Activated naive CD4-positive, alpha-beta T cell treated with anti-CD3 and anti-CD28 coated beads for 36 hours (primary cell): ENCODE measurements at regions of chr14 and their contacts with region 1.

Region 1: DNA sequence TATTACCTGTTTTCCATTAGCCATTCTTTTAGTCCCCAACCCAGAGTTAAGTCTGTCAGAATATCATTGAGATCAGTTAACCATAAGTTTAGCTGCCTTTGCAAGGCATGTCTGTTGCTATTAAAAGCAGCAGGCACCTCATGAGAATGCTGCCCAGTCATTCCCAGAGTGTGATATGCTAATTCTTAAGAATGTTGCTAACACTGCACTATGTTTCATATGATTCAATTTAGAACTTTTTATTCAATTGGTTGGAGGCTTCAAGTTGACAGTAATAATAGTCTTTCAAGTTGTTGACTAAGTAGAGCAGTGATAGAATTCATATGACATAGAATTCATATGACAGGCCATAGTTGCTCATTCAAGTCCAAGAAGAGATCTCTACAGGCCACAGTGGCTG is 292.3 kb downstream of the FUT8 start:
- DNase-seq: peak; percentile 75
- H3K4me3 Mint-ChIP-seq: no peak overlapping the region
- H3K27ac Mint-ChIP-seq: peak overlapping the region; percentile 72
- H3K4me1 Mint-ChIP-seq: peaks cover 12% of the 10 kb centered on the region
- H3K27me3 Mint-ChIP-seq: no peaks in the 10 kb centered on the region

Region 2: DNA sequence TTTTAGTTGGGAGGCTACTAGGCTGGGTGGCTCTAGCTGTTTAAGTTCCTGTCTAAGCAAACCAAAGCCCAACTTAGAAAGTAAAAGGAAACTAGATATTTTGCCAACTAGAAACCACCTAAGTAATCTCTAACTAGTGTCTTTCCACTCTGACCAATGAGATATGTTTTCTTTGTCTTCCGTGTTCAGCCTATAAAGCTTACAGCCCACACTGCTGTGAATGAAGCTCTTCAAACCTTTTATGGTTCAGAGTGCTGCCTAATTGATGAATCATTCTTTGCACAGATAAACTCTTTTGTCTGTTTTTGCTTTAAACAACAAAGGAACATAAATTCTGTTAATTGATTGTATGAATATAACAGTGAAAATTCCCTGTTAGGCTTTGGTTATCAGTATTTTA is 226.3 kb before region 1 on chr14:
- CTCF ChIA-PET with region 1: no interaction called
- intact Hi-C with region 1: loop called (anchors 2 kb)
- DNase-seq: peak; percentile 13
- H3K4me3 Mint-ChIP-seq: no peak overlapping the region
- H3K27ac Mint-ChIP-seq: no peak overlapping the region
- H3K4me1 Mint-ChIP-seq: peaks cover 61% of the 10 kb centered on the region
- H3K27me3 Mint-ChIP-seq: no peaks in the 10 kb centered on the region

Region 3: DNA sequence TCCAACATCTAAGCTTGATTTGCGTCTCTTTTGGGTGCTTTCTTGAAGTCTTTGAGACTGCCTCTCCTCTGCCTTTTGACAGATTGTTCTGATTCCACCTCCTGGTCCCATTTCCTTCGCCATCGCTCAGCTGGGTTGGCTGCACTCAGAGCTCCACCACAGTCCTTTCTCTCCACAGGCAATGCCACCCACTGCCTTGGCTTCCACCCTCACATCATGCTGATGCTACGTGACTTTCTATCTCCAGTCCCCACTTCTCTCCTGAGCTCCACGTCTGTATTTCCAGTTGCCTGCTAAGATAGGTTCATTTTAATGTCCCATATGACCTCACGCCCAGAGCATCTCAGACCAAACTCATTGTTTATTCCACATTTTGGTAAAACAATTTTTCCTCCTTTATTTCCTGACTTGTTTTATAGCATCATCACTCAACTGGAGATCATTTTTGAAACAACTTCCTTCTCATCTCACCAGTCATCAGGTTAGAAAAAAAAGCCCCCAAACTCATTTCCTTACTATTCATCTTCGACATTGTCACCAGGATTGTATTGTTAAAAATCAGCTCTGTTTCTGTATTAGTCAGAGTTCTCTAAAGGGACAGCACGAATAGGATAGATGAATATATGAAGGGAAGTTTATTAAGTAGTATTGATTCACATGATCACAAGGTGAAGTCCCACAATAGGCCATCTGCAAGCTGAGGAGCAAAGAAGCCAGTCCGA is 100.1 kb after region 1 on chr14:
- CTCF ChIA-PET with region 1: no interaction called
- intact Hi-C with region 1: loop called (anchors 1 kb)
- DNase-seq: no peak
- H3K4me3 Mint-ChIP-seq: no peak overlapping the region
- H3K27ac Mint-ChIP-seq: no peak overlapping the region
- H3K4me1 Mint-ChIP-seq: peaks cover 4% of the 10 kb centered on the region
- H3K27me3 Mint-ChIP-seq: no peaks in the 10 kb centered on the region

Region 4: DNA sequence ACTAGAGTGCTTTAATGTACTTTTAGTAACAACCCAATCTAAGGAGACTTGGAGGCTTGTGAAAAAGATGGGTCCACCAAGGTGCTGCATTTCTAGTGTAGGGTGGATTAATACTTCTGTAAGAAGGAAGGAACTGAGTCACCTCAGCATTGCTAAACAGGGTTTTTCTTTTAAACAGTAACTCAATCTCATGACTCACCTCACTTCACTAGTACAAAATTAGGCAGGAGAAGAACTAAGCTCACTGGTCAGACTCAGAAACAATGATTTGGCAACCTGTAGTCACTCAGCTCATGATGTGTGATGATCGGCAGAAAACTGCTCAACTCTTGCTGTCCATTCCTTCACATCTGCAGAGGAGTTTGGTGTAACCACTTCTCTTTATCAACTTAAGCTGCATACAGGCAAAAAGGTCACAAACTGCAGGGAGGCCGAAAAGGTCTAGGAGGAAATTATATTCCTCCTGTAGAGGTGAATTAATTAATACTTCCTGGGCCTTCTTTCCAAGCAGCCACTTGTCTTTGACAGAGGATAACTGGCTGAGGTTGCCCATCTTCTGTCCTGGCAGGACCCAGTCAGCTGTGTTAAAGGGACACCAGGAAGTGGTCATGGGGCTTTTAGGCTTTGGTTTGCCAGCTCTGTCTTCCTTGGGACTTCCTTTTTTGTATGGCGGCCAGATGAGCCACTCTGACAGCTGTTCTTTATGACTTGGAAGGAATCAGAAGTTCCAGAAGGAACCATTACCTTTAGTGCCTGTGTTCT is 174.6 kb after region 1 on chr14:
- CTCF ChIA-PET with region 1: no interaction called
- intact Hi-C with region 1: loop called (anchors 1 kb)
- DNase-seq: peak; percentile 18
- H3K4me3 Mint-ChIP-seq: no peak overlapping the region
- H3K27ac Mint-ChIP-seq: peak overlapping the region; percentile 48
- H3K4me1 Mint-ChIP-seq: peaks cover 31% of the 10 kb centered on the region
- H3K27me3 Mint-ChIP-seq: no peaks in the 10 kb centered on the region

Region 5: DNA sequence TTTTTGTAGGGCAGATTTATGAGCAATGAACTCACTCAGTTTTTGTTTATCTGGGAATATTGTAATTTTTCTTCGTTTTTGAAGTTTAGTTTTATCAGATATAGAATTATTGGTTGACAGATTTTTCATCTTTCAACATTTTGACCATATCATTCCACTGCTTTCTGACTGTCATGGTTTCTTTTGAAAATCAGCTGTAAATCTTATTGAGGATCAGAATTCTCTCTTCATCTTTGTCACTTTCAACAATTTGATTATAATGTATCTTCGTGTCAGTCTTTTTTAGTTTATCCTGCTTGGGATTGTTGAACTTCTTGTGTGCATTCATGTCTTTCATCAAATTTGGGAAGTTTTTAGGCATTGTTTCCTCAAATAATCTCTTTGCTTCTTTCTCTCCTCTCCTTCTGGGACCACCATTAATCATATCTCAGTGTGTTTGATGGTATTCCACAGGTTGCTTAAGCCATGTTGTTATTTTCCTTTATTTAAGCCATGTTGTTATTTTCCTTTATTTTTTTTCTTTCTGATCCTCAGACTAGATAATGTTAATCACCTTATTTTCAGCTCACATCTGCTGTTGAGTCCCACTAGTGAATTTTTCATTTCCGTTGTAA is 1254.7 kb after region 1 on chr14:
- CTCF ChIA-PET with region 1: no interaction called
- intact Hi-C with region 1: no loop called
- DNase-seq: no peak
- H3K4me3 Mint-ChIP-seq: no peak overlapping the region
- H3K27ac Mint-ChIP-seq: no peak overlapping the region
- H3K4me1 Mint-ChIP-seq: no peaks in the 10 kb centered on the region
- H3K27me3 Mint-ChIP-seq: no peaks in the 10 kb centered on the region